ENCODE measurements at regions of chr14 and their contacts with region 1.

Region 1: GRCh38 chr14:69398053-69398817 is at the starts of genes ERH and SLC39A9:
- DNase-seq: peak; percentile 90
- H3K4me3 ChIP-seq: peak within 1 kb of the TSS; percentile 94
- H3K27ac ChIP-seq: peak within 1 kb of the TSS; percentile 85
- H3K27me3 ChIP-seq: no peaks in the 10 kb centered on the region
- CTCF ChIP-seq: no peak
- polyA plus RNA-seq, gene ERH: 110 and 164 TPM in 2 replicates
- polyA plus RNA-seq, gene SLC39A9: 69.5 and 82.2 TPM in 2 replicates

Region 2: DNA sequence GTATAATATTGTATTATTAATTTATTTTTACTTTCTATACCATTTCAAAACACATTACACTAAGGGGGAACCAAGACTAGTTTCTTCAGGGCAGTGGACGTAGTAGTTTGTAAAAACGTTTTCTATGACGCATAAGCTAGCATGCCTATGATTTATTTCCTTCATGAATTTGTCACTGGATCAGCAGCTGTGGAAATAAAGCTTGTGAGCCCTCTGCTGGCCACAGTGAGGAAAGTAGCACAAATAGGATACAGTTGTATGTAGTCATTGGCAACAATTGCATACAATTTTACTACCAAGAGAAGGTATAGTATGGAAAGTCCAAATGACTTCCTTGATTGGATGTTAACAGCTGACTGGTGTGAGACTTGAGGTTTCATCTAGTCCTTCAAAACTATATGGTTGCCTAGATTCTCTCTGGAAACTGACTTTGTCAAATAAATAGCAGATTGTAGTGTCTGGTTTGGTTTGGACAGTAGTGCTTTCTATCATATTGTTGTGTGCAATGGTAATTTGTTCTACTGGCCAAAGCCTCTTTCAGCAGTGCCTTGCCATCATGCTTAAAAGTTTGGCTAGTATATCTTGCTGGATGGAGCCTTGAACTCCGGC is 62.0 kb after region 1 on chr14:
- CTCF ChIA-PET with region 1: interaction called, 12 read pairs
- POLR2A ChIA-PET with region 1: interaction called, 5 read pairs
- DNase-seq: peak; percentile 80
- H3K4me3 ChIP-seq: no peak overlapping the region
- H3K27ac ChIP-seq: no peak overlapping the region
- H3K27me3 ChIP-seq: no peaks in the 10 kb centered on the region
- CTCF ChIP-seq: peak; percentile 85